ENCODE measurements at regions of chr11 and their contacts with region 1.

Region 1: DNA sequence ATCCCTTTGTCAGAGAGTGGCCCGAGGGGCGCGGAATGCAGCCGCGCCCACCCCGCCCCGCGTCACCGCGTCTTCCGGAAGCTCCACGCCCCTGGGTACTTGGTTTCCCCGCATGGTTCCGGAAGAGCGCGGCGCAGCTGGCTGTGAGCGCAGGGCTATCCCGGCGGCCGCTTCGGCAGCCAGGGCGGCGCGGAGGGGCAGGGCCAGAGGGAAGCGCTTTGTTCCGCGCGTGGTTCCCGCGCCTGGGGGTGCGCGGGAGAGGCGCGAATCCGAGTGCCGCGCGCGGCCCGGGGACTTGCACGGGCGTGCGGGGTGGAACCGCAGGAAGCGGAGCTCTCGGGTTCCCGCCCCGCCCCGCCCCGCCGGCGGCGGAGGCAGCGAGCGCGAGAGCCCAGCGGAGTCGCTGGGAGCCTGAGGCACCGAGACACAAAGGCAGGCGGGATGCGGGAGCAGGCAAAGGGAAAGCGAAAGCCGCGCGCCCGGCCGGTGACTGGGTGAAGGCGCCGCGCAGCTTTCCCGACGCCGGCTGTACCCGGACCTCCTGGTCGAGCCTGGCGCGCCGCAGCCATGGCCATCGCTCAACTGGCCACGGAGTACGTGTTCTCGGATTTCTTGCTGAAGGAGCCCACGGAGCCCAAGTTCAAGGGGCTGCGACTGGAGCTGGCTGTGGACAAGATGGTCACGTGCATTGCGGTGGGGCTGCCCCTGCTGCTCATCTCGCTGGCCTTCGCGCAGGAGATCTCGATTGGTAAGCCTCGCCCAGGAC is at the start of gene PANX1:
- DNase-seq: peak; percentile 93
- H3K4me3 ChIP-seq: peak within 1 kb of the TSS; percentile 64 to 83 (median 66)
- H3K27ac ChIP-seq: peak within 1 kb of the TSS; percentile 93 to 96 (median 94)
- H3K4me1 ChIP-seq: peaks cover 0 to 48% (median 46%) of the 10 kb centered on the region in 4 donors
- H3K27me3 ChIP-seq: no peaks in the 10 kb centered on the region
- CTCF ChIP-seq: no peak
- EP300 ChIP-seq: no peak
- POLR2A ChIP-seq: no peak
- total RNA-seq, gene PANX1: 21.6 to 35.7 (median 25.4) TPM

Region 2: DNA sequence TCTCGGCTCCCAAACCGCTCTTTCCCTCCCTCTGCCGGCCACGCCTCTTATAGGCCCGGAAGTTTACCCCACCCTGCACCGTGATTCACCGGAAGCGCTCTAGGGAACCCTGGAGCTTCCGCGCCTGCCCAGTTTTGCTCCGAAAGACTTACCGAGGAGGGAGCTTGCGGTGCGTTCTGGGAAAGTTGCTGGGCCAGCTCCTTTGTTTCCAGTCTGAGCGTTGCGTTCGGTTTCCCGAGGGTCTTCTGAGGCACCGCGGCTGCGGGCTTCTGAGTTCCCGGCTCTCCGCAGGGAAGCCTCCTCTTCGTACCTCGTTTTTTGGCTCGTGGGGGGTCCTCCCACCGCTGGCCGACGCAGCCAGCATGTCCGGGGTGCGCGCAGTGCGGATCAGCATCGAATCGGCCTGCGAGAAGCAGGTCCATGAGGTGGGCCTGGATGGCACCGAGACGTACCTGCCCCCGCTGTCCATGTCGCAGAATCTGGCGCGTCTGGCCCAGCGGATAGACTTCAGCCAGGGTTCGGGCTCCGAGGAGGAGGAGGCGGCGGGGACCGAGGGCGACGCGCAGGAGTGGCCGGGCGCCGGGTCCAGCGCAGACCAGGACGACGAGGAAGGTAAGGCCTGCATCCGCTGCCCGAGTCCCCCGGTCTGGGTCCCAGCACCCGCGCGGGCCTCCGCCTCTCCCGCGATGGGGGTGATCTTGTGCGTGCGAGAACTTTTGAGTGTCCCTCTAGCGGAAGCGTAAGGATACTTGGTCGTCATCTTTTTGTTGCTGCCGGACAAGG is 344.6 kb before region 1 on chr11 and contains the start of gene MED17:
- intact Hi-C with region 1: loop called (anchors 2 kb)
- DNase-seq: peak; percentile 96
- H3K4me3 ChIP-seq: peak within 1 kb of the TSS; percentile 72 to 97 (median 88)
- H3K27ac ChIP-seq: peak within 1 kb of the TSS; percentile 93 to 98 (median 96)
- H3K4me1 ChIP-seq: peaks cover 0 to 39% (median 37%) of the 10 kb centered on the region in 4 donors
- H3K27me3 ChIP-seq: no peaks in the 10 kb centered on the region
- CTCF ChIP-seq: peak; percentile 30 to 48 (median 39)
- EP300 ChIP-seq: no peak
- POLR2A ChIP-seq: peak; percentile 72 to 79
- total RNA-seq, gene MED17: 19.9 to 28.9 (median 23.9) TPM

Region 3: GRCh38 chr11:94011478-94011877 is 117.5 kb before region 1 on chr11:
- intact Hi-C with region 1: no loop called
- DNase-seq: no peak
- H3K4me3 ChIP-seq: no peak overlapping the region
- H3K27ac ChIP-seq: no peak overlapping the region
- H3K4me1 ChIP-seq: no peaks in the 10 kb centered on the region
- H3K27me3 ChIP-seq: no peaks in the 10 kb centered on the region
- CTCF ChIP-seq: no peak
- EP300 ChIP-seq: no peak
- POLR2A ChIP-seq: no peak

Region 4: GRCh38 chr11:94049351-94049750 is 79.6 kb before region 1 on chr11:
- intact Hi-C with region 1: no loop called
- DNase-seq: no peak
- H3K4me3 ChIP-seq: no peak overlapping the region
- H3K27ac ChIP-seq: no peak overlapping the region
- H3K4me1 ChIP-seq: no peaks in the 10 kb centered on the region
- H3K27me3 ChIP-seq: no peaks in the 10 kb centered on the region
- CTCF ChIP-seq: no peak
- EP300 ChIP-seq: no peak
- POLR2A ChIP-seq: no peak

Region 5: DNA sequence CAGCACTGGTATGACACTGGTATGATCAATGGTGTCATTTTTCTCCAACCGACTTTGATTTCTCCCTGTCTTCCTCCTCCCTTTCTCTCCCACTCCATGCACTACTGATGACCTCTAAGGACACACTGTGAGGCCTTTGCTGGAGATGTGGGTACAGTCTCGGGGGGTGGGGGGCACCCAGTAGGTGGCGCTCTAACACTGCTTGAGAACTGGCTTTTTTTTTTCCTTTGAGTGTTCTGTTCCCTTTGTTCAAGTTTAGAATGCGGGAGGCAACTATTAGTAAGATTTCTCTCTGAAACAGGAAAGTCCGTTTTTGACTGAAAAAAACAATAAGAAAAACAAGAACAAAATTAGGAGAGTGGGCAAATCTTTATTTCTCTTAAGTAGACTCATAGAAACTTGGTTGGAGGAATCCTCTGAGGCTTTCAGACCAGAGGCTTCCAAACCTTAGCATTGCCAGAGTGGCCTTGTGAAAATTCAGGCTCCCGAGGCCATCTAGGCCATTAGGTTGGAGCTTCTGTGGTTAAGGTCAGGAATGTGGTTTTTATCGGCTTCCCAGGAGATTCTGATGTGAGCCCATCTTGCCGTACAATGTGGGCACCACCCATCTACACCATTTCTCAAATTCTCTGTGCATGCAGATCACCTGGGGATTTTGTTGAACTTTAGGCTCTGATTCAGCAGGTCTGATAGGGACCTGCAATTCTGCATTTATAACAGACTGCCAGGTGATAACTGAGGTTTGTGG is 42.9 kb after region 1 on chr11:
- intact Hi-C with region 1: loop called (anchors 5 kb)
- DNase-seq: no peak
- H3K4me3 ChIP-seq: no peak overlapping the region
- H3K27ac ChIP-seq: no peak overlapping the region
- H3K4me1 ChIP-seq: peaks cover 0 to 24% (median 10%) of the 10 kb centered on the region in 4 donors
- H3K27me3 ChIP-seq: no peaks in the 10 kb centered on the region
- CTCF ChIP-seq: peak in 1 of 4 experiments; percentile 50
- EP300 ChIP-seq: no peak
- POLR2A ChIP-seq: no peak

Region 6: DNA sequence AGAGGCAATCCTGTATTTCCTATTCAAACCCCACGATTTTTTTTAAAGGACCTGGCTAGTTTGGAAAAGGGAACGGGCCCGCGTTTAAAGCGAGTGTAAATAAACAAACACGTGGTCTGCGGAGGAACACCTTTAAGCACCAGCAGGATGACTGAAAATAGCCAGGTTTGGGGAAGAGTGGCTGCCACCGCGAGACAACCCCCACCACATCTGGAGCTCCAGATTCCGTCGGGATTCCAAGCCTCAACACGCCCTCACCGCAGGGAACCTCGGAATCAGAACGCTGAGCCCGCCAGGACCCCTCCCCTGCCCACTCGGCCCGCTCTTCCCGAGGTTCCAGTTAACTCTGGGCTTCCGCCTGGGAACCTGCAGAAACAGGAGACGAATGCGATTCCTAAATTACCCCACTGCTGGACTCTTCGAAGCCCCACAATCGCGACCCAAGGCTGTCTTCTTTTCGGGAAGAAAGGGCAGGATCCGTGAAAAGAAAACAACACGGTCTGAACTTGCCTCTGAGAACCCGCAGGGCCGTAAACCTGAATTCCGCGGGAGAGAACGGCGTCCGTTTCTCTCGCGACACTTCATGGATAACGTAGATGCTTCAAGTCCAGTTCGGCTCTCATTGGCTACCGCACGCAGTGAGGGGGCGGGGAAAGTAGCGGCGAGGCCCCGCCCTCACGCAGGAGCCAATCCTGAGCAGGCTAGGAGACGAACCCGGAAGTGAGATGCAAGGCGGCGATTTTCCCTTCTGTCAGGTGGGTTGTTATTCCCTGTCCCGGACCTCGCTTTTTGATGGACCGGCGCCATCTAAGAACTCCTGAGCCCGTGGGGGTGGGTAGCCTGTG is 364.6 kb after region 1 on chr11 and contains the starts of genes ANKRD49 and MRE11:
- intact Hi-C with region 1: loop called (anchors 10 kb)
- DNase-seq: peak; percentile 99
- H3K4me3 ChIP-seq: peak within 1 kb of the TSS; percentile 72 to 92 (median 82)
- H3K27ac ChIP-seq: peak within 1 kb of the TSS; percentile 82 to 88 (median 86)
- H3K4me1 ChIP-seq: peaks cover 0 to 30% (median 28%) of the 10 kb centered on the region in 4 donors
- H3K27me3 ChIP-seq: no peaks in the 10 kb centered on the region
- CTCF ChIP-seq: no peak
- EP300 ChIP-seq: no peak
- POLR2A ChIP-seq: peak; percentile 68 to 72
- total RNA-seq, gene ANKRD49: 19.3 to 27.7 (median 23.4) TPM
- total RNA-seq, gene MRE11: 12.5 to 26.6 (median 16.3) TPM

Measured in sigmoid colon (tissue), 7 donors.